Vagina (tissue), 2 donors: ENCODE measurements at regions of chr3 and their contacts with region 1.

Region 1: DNA sequence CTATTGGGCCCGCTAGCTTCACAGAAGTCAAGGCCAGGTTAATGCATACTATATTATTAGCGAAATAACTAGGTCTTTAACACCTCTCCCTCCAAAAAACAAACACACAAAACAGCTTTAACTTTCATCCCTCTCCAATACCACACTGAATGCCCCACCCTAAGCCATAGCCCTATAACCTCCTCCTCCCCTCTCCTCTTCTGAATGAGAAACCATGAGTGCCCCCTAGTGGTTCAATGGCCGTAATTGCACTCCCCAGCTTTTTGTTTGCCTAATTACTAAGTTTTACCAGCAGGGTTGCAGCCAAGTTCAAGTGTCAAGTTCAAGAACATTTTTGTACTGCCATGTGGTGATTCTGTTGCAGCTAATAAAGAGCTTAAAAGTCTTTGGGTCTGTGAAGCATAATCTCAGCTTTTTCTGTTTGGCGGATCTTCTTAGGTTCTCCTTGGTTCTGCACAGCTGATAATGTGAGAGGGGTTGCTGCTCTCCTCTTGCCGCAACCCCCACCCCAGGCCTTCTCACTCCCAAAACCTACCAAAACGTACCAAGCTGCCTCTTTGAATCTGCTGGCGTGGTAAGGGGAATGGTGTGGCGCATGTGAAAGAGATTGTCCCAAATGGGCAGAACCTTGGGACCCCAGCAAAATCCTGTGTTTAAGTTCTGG is 57.9 kb downstream of the RPL22L1 start:
- DNase-seq: no peak
- H3K4me3 ChIP-seq: no peak overlapping the region
- H3K27ac ChIP-seq: no peak overlapping the region
- H3K4me1 ChIP-seq: peaks cover 13% of the 10 kb centered on the region
- H3K27me3 ChIP-seq: no peaks in the 10 kb centered on the region
- CTCF ChIP-seq: peak; percentile 55 to 98 (median 81)
- POLR2A ChIP-seq: no peak

Region 2: GRCh38 chr3:170418422-170419398 is 393.4 kb before region 1 on chr3 and contains the start of gene CLDN11:
- intact Hi-C with region 1: loop called (anchors 5 kb)
- DNase-seq: no peak
- H3K4me3 ChIP-seq: peak within 1 kb of the TSS; percentile 52 to 58
- H3K27ac ChIP-seq: peak within 1 kb of the TSS; percentile 68
- H3K4me1 ChIP-seq: peaks cover 29% of the 10 kb centered on the region
- H3K27me3 ChIP-seq: no peaks in the 10 kb centered on the region
- CTCF ChIP-seq: no peak
- POLR2A ChIP-seq: peak in 1 of 2 donors; percentile 71
- total RNA-seq, gene CLDN11: 136 TPM